ENCODE measurements at regions of chr6 and their contacts with region 1.

Region 1: GRCh38 chr6:89940225-89941027 is 46.2 kb downstream of the GJA10 start:
- DNase-seq: peak; percentile 84
- ATAC-seq: peak; percentile 87
- H3K4me3 Mint-ChIP-seq: no peak overlapping the region
- H3K27ac Mint-ChIP-seq: peak overlapping the region; percentile 59
- H3K4me1 Mint-ChIP-seq: peaks cover 55% of the 10 kb centered on the region
- H3K27me3 Mint-ChIP-seq: no peaks in the 10 kb centered on the region

Region 2: GRCh38 chr6:89775150-89775549 is 165.3 kb before region 1 on chr6:
- CTCF ChIA-PET with region 1: no interaction called
- POLR2A ChIA-PET with region 1: no interaction called
- DNase-seq: no peak
- ATAC-seq: no peak
- H3K4me3 Mint-ChIP-seq: no peak overlapping the region
- H3K27ac Mint-ChIP-seq: no peak overlapping the region
- H3K4me1 Mint-ChIP-seq: no peaks in the 10 kb centered on the region
- H3K27me3 Mint-ChIP-seq: no peaks in the 10 kb centered on the region

Region 3: DNA sequence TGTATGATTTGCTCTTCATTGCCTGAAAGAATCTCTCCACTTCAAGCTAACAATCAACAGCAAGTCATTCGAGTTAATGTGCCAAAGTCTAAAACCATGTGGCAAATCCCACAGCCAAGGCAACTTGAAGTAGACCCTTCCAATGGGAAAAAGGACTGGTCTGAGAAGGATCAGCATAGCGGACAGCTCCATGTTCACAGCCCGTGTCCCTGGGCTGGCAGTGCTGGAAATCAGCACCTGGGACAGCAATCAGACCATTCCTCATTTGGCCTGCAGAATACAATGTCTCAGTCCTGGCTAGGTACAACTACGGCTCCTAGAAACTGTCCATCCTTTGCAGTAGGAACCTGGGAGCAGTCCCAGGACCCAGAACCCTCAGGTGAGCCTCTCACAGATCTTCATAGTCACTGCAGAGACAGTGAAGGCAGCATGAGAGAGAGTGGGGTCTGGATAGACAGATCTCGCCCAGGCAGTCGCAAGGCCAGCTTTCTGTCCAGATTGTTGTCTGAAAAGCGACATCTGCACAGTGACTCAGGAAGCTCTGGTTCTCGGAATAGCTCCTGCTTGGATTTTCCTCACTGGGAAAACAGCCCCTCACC is 45.1 kb before region 1 on chr6:
- CTCF ChIA-PET with region 1: no interaction called
- POLR2A ChIA-PET with region 1: no interaction called
- DNase-seq: peak; percentile 35
- ATAC-seq: peak; percentile 60
- H3K4me3 Mint-ChIP-seq: no peak overlapping the region
- H3K27ac Mint-ChIP-seq: no peak overlapping the region
- H3K4me1 Mint-ChIP-seq: peaks cover 2% of the 10 kb centered on the region
- H3K27me3 Mint-ChIP-seq: peaks cover 44% of the 10 kb centered on the region

Region 4: DNA sequence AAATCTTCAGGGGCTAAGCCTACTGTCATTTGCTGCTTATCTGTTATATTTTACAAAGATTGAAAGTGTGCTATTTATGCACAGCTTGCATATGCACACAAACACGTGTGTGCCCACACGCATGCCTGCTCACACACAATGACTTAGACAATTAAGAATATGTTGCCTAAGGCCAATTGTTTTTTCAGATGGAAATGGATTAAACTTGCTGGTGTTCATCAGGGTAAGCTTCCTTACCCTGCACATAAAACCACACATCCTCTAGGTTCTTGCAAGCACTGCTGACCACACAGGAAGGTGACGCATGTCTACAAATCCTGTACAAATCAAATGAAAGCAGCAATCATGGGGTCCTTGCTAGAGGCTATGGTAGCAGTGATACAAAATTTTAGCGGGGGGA is 12.3 kb after region 1 on chr6:
- CTCF ChIA-PET with region 1: interaction called, 19 read pairs
- POLR2A ChIA-PET with region 1: interaction called, 5 read pairs
- DNase-seq: peak; percentile 85
- ATAC-seq: peak; percentile 95
- H3K4me3 Mint-ChIP-seq: peak overlapping the region; percentile 61
- H3K27ac Mint-ChIP-seq: peak overlapping the region; percentile 90
- H3K4me1 Mint-ChIP-seq: peaks cover 73% of the 10 kb centered on the region
- H3K27me3 Mint-ChIP-seq: no peaks in the 10 kb centered on the region

Region 5: DNA sequence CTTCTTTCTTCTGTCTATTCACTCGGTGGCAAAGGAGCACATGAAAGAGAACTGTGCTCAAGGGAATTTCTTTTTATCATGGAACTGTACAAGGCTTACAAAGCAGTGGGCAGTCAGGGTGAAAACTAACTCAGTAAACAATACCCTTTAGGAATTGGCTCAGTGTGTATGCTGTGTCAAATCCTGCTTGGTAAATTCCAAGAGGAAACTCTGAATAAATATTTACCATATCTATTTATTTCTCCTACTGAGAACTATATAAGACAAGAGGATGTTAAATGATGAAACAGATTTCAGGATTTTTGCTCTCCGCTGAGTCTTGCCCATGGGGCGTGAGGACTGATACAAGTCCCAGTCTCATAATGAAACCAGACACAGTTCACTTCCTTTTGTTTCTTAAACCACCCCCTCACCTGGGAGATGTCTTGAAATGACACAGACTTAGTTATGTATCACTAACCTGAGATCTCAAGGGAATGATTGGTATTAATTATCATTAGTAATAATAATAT is 167.4 kb after region 1 on chr6:
- CTCF ChIA-PET with region 1: interaction called, 41 read pairs
- POLR2A ChIA-PET with region 1: interaction called, 3 read pairs
- DNase-seq: peak; percentile 52
- ATAC-seq: peak; percentile 50
- H3K4me3 Mint-ChIP-seq: peak overlapping the region; percentile 30
- H3K27ac Mint-ChIP-seq: peak overlapping the region; percentile 60
- H3K4me1 Mint-ChIP-seq: peaks cover 93% of the 10 kb centered on the region
- H3K27me3 Mint-ChIP-seq: no peaks in the 10 kb centered on the region

Region 6: DNA sequence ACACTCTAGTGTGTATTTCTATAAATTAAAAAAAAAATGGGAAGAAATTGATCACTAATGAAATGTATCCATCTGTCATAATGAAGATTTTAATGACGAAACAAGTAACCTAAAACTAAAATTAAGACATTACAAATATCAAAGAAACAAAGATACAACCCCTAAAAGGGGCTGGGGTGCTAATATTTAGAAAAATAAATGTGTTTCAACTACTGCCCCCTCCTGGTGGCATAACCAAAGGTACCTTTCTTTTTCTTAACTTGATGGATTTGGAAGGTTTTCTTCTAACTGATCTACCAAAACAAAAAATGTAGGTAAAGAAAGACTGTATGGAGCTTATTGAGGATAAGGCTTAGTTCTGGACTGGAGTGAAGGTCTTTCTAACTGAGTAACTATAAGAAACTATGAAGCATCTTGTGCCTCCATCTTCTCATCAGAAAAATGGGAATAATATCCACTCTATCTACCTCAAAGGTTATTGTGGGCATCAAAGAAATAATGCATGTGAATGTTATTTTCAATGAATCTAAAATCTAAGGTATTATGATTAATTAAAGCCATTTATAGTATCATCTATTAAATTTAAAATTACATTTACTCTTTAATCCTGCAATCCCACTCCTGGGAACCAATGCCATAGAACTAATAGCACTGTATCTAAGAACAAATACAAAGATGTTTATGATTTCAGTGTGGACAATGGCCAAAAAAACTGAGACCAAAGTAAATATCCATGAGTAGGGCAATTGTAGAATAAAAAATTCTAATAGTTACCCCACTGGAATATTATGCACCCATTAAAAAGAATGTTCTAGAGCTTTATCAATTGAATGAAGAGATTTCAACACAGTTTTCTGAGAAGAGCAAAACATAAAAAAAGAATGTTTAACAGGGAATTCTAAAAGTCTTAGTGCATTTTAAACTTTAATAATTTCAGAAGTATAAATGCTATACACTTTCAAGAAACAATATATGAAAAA is 239.1 kb after region 1 on chr6:
- CTCF ChIA-PET with region 1: interaction called, 36 read pairs
- POLR2A ChIA-PET with region 1: no interaction called
- DNase-seq: peak; percentile 57
- ATAC-seq: no peak
- H3K4me3 Mint-ChIP-seq: no peak overlapping the region
- H3K27ac Mint-ChIP-seq: peak overlapping the region; percentile 92
- H3K4me1 Mint-ChIP-seq: peaks cover 84% of the 10 kb centered on the region
- H3K27me3 Mint-ChIP-seq: no peaks in the 10 kb centered on the region

Region 7: GRCh38 chr6:90216072-90216977 is 275.9 kb after region 1 on chr6:
- CTCF ChIA-PET with region 1: interaction called, 15 read pairs
- POLR2A ChIA-PET with region 1: no interaction called
- DNase-seq: peak; percentile 59
- ATAC-seq: peak; percentile 25
- H3K4me3 Mint-ChIP-seq: peak overlapping the region; percentile 57
- H3K27ac Mint-ChIP-seq: no peak overlapping the region
- H3K4me1 Mint-ChIP-seq: peaks cover 25% of the 10 kb centered on the region
- H3K27me3 Mint-ChIP-seq: no peaks in the 10 kb centered on the region

Region 8: DNA sequence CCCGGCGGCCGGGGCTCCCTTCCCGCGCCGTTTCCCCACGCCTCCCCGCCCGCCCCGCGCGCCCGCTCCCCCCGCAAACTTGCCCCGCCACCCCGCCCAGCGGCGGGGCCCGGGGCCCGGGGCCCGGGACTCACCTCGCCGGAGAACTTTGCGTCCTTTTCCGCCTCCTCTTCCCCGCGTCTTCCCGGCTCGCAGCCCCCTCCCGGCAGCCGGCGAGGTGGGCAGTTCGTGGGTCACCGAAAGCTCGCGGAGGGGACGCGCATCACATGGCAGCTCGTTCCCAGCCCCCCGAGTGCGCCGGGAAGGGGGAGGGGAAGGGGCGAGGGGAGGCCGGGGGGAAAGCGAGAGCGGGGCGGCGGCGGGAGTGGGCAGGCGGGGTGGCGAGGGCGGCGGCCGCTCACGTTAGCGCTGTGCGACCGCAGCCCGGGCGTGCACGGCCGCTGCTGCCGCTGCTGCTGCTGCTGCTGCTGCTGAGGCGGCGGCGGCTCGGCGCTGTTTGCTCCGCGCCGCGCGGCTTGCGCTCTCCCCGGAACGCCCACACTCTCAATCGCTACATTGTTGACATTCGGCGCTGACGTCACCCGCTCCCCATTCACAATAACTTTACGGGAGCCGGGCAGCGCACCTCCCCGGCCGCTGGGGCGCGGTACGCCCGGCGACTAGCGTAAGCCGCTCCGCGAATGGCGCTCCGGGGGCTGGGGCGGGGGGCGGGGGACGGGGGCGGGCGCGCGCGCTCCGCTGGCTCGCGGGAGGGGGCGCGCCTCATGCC is 356.1 kb after region 1 on chr6 and contains the start of gene BACH2:
- CTCF ChIA-PET with region 1: interaction called, 15 read pairs
- POLR2A ChIA-PET with region 1: no interaction called
- DNase-seq: peak; percentile 96
- ATAC-seq: peak; percentile 74
- H3K4me3 Mint-ChIP-seq: peak within 1 kb of the TSS; percentile 81
- H3K27ac Mint-ChIP-seq: peak within 1 kb of the TSS; percentile 84
- H3K4me1 Mint-ChIP-seq: peaks cover 32% of the 10 kb centered on the region
- H3K27me3 Mint-ChIP-seq: peaks cover 17% of the 10 kb centered on the region
- total RNA-seq, gene BACH2: 61.3 to 70.9 TPM

Measured in activated CD8-positive, alpha-beta T cell treated with anti-CD3 and anti-CD28 coated beads, Interleukin-2, amount 10 ng/mL, durations not matched to agents 7 days and 5 days (primary cell).